Activated CD4-positive, alpha-beta memory T cell treated with anti-CD3 and anti-CD28 coated beads for 36 hours (primary cell): ENCODE measurements at regions of chr12 and their contacts with region 1.

Region 1: DNA sequence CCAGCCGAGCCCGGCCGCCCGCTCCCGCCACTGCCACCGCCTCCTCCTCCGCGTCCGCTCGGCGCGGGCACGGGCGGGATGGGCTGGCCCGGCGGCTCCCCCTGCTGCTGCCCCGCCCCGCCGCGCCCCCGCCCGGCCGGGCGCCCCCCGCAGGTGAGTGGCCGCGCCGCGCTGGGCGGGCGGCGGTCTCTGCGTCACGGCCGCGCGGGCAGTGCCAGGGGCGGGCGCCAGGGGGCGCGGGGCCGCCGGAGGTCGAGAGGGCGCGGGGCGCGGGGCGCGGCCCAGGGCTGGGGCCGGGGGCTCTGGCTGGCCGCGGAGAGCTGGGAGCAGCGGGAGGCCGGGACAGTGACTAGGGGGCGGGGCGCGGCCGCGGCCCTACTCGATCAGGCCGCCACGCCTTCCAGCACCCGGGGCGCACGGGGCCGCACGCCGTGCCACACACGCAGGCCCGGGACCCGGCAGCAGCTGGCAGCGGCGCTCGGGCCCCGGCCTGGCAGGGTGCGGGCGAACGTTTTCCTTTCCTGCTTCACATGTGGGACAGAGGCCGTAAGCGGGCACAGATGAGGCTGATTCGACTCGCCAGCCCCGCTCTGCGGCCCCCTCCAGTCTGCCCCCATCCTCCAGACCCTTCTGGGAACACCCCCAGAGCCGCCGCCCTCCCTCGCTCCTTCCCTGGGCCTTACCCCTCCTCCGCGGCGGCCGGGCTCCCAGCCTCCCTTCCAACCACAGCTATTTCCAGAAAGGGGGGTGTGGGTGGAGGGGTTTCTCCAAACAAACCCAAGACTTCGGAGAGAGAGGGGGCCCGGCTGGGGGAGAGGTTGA is 2.4 kb upstream of the TNS2 start:
- DNase-seq: peak; percentile 74
- H3K4me3 Mint-ChIP-seq: peak overlapping the region; percentile 32
- H3K27ac Mint-ChIP-seq: no peak overlapping the region
- H3K4me1 Mint-ChIP-seq: peaks cover 29% of the 10 kb centered on the region
- H3K27me3 Mint-ChIP-seq: no peaks in the 10 kb centered on the region

Region 2: DNA sequence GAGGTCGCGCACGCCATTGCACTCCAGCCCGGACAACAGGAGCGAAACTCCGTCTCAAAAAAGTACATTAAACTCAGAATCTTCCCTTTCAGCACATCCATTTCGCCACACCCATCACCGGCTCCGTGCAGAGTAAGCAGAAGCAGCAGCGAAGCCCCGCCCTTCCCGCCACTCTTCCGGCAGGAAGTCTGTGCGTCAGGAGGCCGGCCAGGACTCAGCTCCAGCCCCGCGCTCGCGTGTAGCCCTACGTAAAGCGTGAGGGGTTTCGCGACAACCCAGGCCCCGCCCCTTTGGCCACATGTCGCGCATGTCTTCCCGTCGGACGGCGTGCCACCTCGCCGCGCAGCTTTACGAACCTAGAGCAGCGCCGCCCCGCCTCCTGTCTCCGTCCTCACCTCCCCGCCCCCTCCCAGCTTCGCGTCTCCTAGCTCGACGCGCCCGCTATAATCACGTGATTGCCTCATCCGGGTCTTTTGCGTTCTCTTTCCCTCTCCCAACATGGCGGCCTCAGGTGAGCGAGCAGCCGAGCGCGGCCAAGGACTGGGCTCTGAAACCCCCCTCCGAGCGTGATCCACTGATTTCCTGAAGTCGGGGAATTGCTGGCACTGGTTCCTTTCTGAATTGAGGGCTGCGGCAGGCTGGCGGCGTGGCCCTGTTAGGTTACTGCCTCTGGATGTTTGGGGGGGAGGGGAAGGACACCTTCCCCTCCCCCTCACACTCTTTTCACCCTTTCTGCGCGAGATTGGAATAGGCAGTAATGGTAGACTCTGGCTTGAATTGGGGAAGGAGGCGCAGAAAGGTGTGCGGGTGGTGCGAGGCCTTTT is 41.2 kb before region 1 on chr12 and contains the start of gene EIF4B:
- CTCF ChIA-PET with region 1: interaction called, 6 read pairs
- POLR2A ChIA-PET with region 1: interaction called, 6 read pairs
- intact Hi-C with region 1: loop called (anchors 2 kb)
- DNase-seq: peak; percentile 100
- H3K4me3 Mint-ChIP-seq: peak within 1 kb of the TSS; percentile 98
- H3K27ac Mint-ChIP-seq: peak within 1 kb of the TSS; percentile 98
- H3K4me1 Mint-ChIP-seq: peaks cover 50% of the 10 kb centered on the region
- H3K27me3 Mint-ChIP-seq: no peaks in the 10 kb centered on the region
- total RNA-seq, gene EIF4B: 686 to 718 TPM

Region 3: GRCh38 chr12:53036802-53037201 is 10.6 kb before region 1 on chr12:
- CTCF ChIA-PET with region 1: interaction called, 14 read pairs
- POLR2A ChIA-PET with region 1: interaction called, 3 read pairs
- intact Hi-C with region 1: loop called (anchors 1 kb)
- DNase-seq: no peak
- H3K4me3 Mint-ChIP-seq: no peak overlapping the region
- H3K27ac Mint-ChIP-seq: no peak overlapping the region
- H3K4me1 Mint-ChIP-seq: peaks cover 16% of the 10 kb centered on the region
- H3K27me3 Mint-ChIP-seq: no peaks in the 10 kb centered on the region

Region 4: GRCh38 chr12:53231826-53232645 is 184.6 kb after region 1 on chr12 and contains the start of gene RARG:
- CTCF ChIA-PET with region 1: no interaction called
- POLR2A ChIA-PET with region 1: no interaction called
- intact Hi-C with region 1: no loop called
- DNase-seq: peak; percentile 81
- H3K4me3 Mint-ChIP-seq: peak within 1 kb of the TSS; percentile 86
- H3K27ac Mint-ChIP-seq: peak within 1 kb of the TSS; percentile 91
- H3K4me1 Mint-ChIP-seq: peaks cover 74% of the 10 kb centered on the region
- H3K27me3 Mint-ChIP-seq: no peaks in the 10 kb centered on the region
- total RNA-seq, gene RARG: 21.8 to 25.2 TPM